ENCODE measurements at regions of chr7 and their contacts with region 1.

Region 1: DNA sequence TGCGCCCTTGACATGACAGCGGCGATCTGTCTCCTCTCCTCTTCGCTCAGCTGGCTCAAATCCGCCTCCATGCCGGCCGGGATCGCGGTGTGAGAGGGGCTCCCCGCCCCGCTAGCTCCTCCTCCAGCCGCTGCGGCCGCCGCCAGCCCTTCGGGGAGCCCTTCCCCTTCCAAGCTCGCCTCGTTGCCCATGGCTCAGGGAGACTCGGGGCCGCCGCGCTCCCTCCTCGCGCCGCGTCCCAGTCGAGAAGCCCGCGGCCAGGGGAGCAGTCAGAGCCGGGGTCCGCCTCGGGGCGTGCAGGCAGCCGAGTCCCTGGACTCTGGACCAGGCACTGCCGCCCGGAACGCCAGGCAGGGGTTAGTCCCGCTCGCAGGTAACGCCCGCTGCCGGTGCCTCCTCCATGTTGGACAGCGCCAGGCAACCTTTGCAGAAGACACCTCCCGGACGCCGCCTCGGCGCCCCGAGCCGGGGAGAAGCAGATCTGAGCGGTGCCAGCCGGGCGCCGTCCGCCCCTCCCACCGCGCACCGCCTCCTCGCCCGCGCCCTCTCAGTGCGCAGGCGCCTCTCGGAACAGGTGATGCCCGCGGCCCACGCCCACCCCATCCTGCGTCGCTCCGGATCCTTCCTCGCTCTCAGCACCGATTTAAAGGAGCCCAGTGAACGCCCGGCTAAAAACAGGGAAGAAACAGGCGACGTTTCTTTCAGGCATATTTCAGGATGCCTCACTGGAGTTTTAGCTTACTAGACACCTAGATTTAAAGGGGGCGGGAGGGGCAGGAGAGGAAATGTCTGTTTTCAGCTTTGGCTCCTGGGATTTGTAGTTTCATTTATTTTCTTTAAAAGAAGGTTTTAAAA is at the start of gene PCLO:
- DNase-seq: peak; percentile 96
- ATAC-seq: peak; percentile 89
- H3K4me3 ChIP-seq: peak within 1 kb of the TSS; percentile 95
- H3K27ac ChIP-seq: peak within 1 kb of the TSS; percentile 38; the same call in 1 of the 2 replicates
- H3K4me1 ChIP-seq: peaks cover 30% of the 10 kb centered on the region
- H3K27me3 ChIP-seq: no peaks in the 10 kb centered on the region
- CTCF ChIP-seq: no peak
- total RNA-seq, gene PCLO: 3.5 and 7.5 TPM in 2 replicates

Region 2: DNA sequence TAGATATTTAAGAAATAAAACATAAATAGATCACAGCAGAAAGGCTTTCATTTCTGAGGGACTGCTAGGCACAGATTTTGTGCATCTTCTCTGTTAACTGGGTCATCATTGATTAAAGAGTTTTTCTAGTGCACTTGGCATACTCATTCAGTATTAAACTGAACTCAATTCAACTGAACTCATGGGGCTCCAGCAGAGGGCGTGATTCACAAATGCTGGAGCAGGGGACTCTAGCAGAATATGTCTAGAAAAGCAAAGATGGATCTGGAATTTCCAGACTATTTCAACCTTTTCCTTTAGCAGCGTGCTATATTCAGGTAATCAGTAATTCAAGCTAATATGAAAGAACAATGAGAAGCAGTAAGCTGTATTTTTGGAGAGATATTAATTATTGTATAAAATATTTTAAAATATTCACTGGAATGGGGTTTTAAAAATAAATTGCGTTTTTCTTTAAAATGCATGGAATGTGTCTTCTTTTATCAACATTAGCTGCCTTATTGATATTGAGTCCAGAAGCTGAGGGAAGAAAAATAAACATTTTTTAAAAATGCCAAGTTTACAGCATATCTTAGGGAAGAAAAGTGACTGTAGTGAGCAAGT is 422.3 kb before region 1 on chr7:
- CTCF ChIA-PET with region 1: no interaction called
- POLR2A ChIA-PET with region 1: no interaction called
- intact Hi-C with region 1: loop called (anchors 5 kb)
- DNase-seq: peak; percentile 73
- ATAC-seq: peak; percentile 84
- H3K4me3 ChIP-seq: no peak overlapping the region
- H3K27ac ChIP-seq: no peak overlapping the region
- H3K4me1 ChIP-seq: no peaks in the 10 kb centered on the region
- H3K27me3 ChIP-seq: no peaks in the 10 kb centered on the region
- CTCF ChIP-seq: peak; percentile 82

Region 3: DNA sequence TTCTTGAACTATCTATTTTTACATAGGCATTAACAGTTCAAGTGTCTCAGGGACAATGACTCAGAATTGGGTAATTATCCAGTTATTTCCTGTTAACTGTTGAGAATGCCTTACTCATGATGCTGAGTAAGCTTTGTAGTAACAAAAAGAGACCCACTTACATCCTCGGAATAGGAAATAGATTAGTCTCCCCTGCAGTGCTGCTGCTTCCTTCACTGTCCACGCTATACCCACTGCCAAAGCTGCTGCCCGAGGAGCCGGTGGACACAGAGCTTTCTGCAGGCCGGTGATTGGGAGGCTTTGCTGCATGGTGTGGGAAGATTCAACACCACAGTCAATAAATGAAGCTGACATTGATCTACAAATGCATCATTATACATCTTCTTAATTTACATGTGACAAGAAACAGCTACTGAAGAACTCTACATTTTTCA is 357.1 kb before region 1 on chr7:
- CTCF ChIA-PET with region 1: no interaction called
- POLR2A ChIA-PET with region 1: no interaction called
- intact Hi-C with region 1: loop called (anchors 2 kb)
- DNase-seq: peak; percentile 89
- ATAC-seq: peak; percentile 96
- H3K4me3 ChIP-seq: peak overlapping the region; percentile 47; the same call in 1 of the 2 replicates
- H3K27ac ChIP-seq: peak overlapping the region; percentile 38; the same call in 1 of the 2 replicates
- H3K4me1 ChIP-seq: peaks cover 30% of the 10 kb centered on the region
- H3K27me3 ChIP-seq: no peaks in the 10 kb centered on the region
- CTCF ChIP-seq: no peak

Region 4: GRCh38 chr7:82810558-82811259 is 351.9 kb before region 1 on chr7:
- CTCF ChIA-PET with region 1: no interaction called
- POLR2A ChIA-PET with region 1: no interaction called
- intact Hi-C with region 1: loop called (anchors 2 kb)
- DNase-seq: peak; percentile 63
- ATAC-seq: peak; percentile 97
- H3K4me3 ChIP-seq: no peak overlapping the region
- H3K27ac ChIP-seq: no peak overlapping the region
- H3K4me1 ChIP-seq: peaks cover 12% of the 10 kb centered on the region
- H3K27me3 ChIP-seq: no peaks in the 10 kb centered on the region
- CTCF ChIP-seq: peak; percentile 83

Region 5: DNA sequence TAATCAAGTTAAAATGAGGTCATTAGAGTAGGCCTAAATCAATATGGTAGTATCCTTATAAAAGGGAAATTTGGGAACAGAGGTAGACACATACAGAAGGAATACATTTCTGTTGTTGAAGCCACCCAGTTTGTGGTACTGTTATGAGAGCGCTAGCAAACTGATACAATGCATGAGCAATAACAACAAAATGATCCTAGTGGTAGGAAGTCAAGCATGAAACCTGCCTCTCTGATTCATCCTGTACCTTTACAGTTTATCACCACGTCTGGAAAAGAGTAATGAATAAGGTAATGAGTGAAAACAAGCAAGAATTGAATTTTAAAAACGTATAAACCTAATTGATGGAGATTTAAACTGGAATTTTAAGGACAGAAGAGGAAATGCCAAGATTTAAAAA is 217.1 kb before region 1 on chr7:
- CTCF ChIA-PET with region 1: no interaction called
- POLR2A ChIA-PET with region 1: no interaction called
- intact Hi-C with region 1: loop called (anchors 5 kb)
- DNase-seq: peak; percentile 74
- ATAC-seq: peak; percentile 97
- H3K4me3 ChIP-seq: peak overlapping the region; percentile 34; the same call in 1 of the 2 replicates
- H3K27ac ChIP-seq: peak overlapping the region; percentile 80
- H3K4me1 ChIP-seq: peaks cover 18% of the 10 kb centered on the region
- H3K27me3 ChIP-seq: no peaks in the 10 kb centered on the region
- CTCF ChIP-seq: no peak

Region 6: GRCh38 chr7:83005410-83005809 is 157.2 kb before region 1 on chr7:
- CTCF ChIA-PET with region 1: no interaction called
- POLR2A ChIA-PET with region 1: no interaction called
- intact Hi-C with region 1: loop called (anchors 5 kb)
- DNase-seq: peak; percentile 60
- ATAC-seq: peak; percentile 39; the same call in 1 of the 2 replicates
- H3K4me3 ChIP-seq: no peak overlapping the region
- H3K27ac ChIP-seq: no peak overlapping the region
- H3K4me1 ChIP-seq: peaks cover 19% of the 10 kb centered on the region
- H3K27me3 ChIP-seq: no peaks in the 10 kb centered on the region
- CTCF ChIP-seq: peak; percentile 58

Region 7: GRCh38 chr7:83130623-83131545 is 31.7 kb before region 1 on chr7:
- CTCF ChIA-PET with region 1: no interaction called
- POLR2A ChIA-PET with region 1: no interaction called
- intact Hi-C with region 1: loop called (anchors 2 kb)
- DNase-seq: peak; percentile 59
- ATAC-seq: peak; percentile 86
- H3K4me3 ChIP-seq: no peak overlapping the region
- H3K27ac ChIP-seq: peak overlapping the region; percentile 47
- H3K4me1 ChIP-seq: peaks cover 17% of the 10 kb centered on the region
- H3K27me3 ChIP-seq: no peaks in the 10 kb centered on the region
- CTCF ChIP-seq: no peak